ENCODE measurements at regions of chr6 and their contacts with region 1.

Region 1: DNA sequence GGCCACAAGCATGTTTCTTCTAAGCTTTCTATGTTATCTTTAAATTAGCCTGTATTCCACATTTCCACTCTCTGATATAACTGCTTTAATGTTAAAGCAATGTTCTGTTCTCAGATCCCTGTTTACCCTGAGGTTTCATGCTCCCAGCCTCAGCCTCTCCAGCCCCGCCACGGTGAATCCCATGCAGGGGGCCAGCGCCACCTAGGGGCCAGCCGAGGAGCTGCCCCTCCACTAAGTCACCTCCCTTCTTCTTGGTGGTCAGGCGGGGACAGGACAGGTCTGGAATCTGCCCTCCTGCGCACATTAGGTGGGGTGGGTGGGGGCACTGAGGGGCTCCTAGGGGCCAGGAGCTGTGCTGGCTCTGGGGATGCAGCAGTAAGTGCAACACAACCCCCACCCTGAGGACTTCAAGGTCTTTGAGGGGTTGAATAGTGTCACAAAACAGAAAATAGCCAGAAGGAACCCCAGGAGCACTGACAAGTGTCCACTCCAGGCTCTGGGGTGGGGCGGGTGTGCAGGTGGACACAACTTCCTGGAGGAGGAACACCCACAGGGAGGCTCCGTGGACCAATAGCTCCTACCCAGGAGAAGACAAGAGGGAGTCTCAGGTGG is 61.6 kb downstream of the RAB44 start:
- DNase-seq: peak; percentile 76
- H3K4me3 Mint-ChIP-seq: no peak overlapping the region
- H3K27ac Mint-ChIP-seq: peak overlapping the region; percentile 61
- H3K4me1 Mint-ChIP-seq: peaks cover 49% of the 10 kb centered on the region
- H3K27me3 Mint-ChIP-seq: no peaks in the 10 kb centered on the region

Region 2: GRCh38 chr6:36442671-36443470 is 316.4 kb before region 1 on chr6 and contains the starts of genes KCTD20 and PXT1:
- intact Hi-C with region 1: loop called (anchors 5 kb)
- DNase-seq: peak; percentile 86
- H3K4me3 Mint-ChIP-seq: peak within 1 kb of the TSS; percentile 96
- H3K27ac Mint-ChIP-seq: peak within 1 kb of the TSS; percentile 95
- H3K4me1 Mint-ChIP-seq: peaks cover 48% of the 10 kb centered on the region
- H3K27me3 Mint-ChIP-seq: no peaks in the 10 kb centered on the region
- total RNA-seq, gene KCTD20: 62.4 and 62.8 TPM in 2 replicates
- total RNA-seq, gene PXT1: 0.16 and 0.29 TPM in 2 replicates

Region 3: DNA sequence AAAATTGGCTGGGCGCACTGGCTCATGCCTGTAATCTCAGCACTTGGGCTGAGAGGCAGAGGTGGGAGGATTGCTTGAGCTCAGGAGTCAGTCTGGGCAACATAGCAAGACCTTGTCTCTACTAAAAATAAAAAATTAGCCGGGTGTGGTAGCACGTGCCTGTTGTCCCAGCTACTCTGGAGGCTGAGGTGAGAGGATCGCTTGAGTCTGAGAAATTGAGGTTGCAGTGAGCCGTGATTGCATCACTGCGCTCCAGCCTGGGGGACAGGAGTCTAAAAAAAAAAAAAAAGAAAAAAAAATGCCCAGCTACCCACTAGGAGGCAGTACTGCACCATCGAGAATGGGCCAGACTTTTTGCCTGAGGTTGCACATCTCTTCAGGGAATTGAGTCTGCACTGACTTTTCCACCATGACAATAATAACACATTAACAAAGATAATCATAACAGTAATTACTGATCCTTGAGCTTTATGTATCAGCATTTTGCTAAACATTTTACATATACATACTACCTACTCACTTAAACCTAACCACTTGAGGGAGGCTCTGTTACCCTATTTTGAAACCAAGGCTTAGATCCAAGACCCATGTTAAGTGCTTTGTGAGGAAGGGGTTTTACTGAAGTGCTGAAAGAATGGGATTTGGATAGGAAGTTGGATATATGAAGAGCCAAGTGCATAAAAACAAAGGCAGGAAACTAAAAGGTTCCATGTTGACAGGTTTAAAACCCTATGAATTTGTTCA is 144.1 kb before region 1 on chr6:
- intact Hi-C with region 1: loop called (anchors 1 kb)
- DNase-seq: peak; percentile 37
- H3K4me3 Mint-ChIP-seq: no peak overlapping the region
- H3K27ac Mint-ChIP-seq: no peak overlapping the region
- H3K4me1 Mint-ChIP-seq: peaks cover 12% of the 10 kb centered on the region
- H3K27me3 Mint-ChIP-seq: no peaks in the 10 kb centered on the region

Region 4: DNA sequence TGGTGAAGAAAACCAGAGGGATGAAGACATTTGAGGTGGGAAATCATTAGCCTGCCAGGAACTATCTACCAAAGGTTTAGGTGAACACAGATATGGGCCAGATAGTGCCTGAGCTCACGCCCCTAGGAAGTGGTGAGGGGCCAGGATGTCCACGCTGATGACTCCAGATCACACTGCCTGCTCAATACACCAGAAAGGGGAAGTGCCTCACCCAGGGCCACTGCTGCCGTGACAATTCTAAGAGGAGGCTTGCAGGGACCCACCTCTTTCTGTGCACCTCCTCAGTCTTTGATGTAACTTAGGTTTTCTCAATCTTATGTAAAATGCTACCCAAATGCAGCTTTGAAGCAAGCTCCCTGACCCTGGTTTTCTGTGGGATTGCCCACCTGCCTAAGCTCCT is 67.0 kb before region 1 on chr6:
- intact Hi-C with region 1: loop called (anchors 1 kb)
- DNase-seq: peak; percentile 48
- H3K4me3 Mint-ChIP-seq: no peak overlapping the region
- H3K27ac Mint-ChIP-seq: peak overlapping the region; percentile 66
- H3K4me1 Mint-ChIP-seq: peaks cover 66% of the 10 kb centered on the region
- H3K27me3 Mint-ChIP-seq: no peaks in the 10 kb centered on the region

Region 5: GRCh38 chr6:36735110-36736071 is 23.9 kb before region 1 on chr6:
- intact Hi-C with region 1: loop called (anchors 1 kb)
- DNase-seq: peak; percentile 54
- H3K4me3 Mint-ChIP-seq: peak overlapping the region; percentile 67
- H3K27ac Mint-ChIP-seq: peak overlapping the region; percentile 89
- H3K4me1 Mint-ChIP-seq: peaks cover 41% of the 10 kb centered on the region
- H3K27me3 Mint-ChIP-seq: no peaks in the 10 kb centered on the region

Region 6: GRCh38 chr6:36780442-36781177 is 21.4 kb after region 1 on chr6:
- intact Hi-C with region 1: no loop called
- DNase-seq: no peak
- H3K4me3 Mint-ChIP-seq: no peak overlapping the region
- H3K27ac Mint-ChIP-seq: no peak overlapping the region
- H3K4me1 Mint-ChIP-seq: peaks cover 6% of the 10 kb centered on the region
- H3K27me3 Mint-ChIP-seq: peaks cover 4% of the 10 kb centered on the region

Region 7: GRCh38 chr6:36968266-36968977 is 209.2 kb after region 1 on chr6:
- intact Hi-C with region 1: no loop called
- DNase-seq: no peak
- H3K4me3 Mint-ChIP-seq: no peak overlapping the region
- H3K27ac Mint-ChIP-seq: no peak overlapping the region
- H3K4me1 Mint-ChIP-seq: peaks cover 13% of the 10 kb centered on the region
- H3K27me3 Mint-ChIP-seq: no peaks in the 10 kb centered on the region

Measured in activated T-helper 1 cell treated with anti-CD3 and anti-CD28 coated beads, Interleukin-12 subunit alpha, Interleukin-12 subunit beta, Interleukin-2, Interleukin-4 antibody, amounts not matched to agents 30 ng/mL and 10 ng/mL and 1 ng/mL, durations not matched to agents 14 hours and 24 hours and 36 hours (primary cell).